ENCODE measurements at regions of chr15 and their contacts with region 1.

Region 1: DNA sequence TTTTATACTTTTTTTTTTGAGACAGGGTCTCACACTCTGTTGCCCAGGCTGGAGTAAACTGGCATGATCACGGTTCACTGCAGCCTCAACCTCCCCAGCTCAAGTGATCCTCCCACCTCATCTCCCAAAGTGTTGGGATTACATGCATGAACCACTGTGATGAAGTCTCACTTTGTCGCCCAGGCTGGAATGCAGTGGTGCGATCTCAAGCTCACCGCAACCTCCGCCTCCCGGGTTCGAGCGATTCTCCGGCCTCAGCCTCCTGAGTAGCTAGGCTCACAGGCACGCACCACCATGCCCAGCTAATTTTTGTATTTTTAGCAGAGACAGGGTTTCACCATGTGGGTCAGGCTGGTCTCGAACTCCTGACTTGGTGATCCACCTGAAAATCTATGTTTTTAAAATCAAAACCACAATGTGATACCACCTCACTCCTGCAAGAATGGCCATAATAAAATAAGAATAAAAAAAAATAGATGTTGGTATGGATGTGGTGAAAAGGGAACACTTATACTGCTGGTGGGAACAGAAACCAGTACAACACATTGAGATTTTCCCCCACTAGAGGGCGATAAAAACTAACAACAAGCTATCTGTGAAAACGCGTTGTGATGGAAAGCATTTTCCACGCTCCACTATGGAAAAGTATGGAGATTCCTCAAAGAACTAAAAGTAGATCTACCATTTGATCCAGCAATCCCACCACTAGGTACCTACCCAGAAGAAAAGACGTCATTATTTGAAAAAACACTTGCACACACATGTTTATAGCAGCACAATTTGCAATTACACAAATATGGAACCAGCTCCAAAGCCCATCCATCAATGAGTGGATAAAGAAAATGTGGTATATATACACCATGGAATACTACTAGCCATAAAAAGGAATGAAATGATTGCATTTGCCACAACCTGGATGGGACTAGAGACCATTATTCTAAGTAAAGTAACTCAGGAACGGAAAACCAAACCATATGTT is 26.8 kb upstream of the OCA2 start:
- DNase-seq: no peak
- ATAC-seq: no peak
- H3K4me3 Mint-ChIP-seq: no peak overlapping the region
- H3K27ac Mint-ChIP-seq: no peak overlapping the region
- H3K4me1 Mint-ChIP-seq: no peaks in the 10 kb centered on the region
- H3K27me3 Mint-ChIP-seq: no peaks in the 10 kb centered on the region
- CTCF ChIP-seq: peak; percentile 77

Region 2: DNA sequence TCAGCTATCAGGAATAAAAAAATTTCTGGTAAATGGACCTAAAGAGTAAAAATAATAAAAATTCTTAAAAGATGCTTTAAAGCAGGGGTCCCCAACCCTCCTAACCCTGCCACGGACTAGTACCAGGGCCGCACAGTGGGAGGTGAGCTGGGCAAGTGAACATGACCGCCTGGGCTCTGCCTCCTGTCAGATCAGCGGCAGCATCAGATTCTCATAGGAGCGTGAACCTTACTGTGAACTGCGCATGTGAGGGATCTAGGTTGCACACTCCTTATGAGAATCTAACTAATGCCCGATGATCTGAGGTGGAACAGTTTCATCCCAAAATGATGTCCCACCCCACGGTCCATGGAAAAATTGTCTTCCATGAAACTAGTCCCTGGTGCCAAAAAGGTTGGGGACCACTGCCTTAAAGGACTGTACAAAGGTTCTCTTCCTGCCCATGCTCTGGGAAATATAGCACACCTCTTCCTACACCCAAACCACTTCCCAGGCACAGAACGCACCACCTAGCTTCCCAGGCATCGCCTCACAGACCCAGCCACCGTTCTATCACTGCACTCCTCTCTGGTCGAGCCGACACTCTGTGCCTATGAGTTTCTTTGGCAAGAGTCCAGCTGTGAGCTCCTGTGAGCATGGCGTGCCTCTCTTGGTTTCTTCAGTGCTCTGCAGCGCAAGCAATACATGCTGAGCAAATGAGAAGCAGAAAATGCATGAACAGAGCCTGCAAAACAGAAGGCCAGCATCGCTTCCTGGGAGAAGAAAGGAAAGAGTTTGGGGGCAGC is 131.8 kb before region 1 on chr15:
- CTCF ChIA-PET with region 1: no interaction called
- POLR2A ChIA-PET with region 1: no interaction called
- intact Hi-C with region 1: no loop called
- DNase-seq: no peak
- ATAC-seq: no peak
- H3K4me3 Mint-ChIP-seq: no peak overlapping the region
- H3K27ac Mint-ChIP-seq: no peak overlapping the region
- H3K4me1 Mint-ChIP-seq: no peaks in the 10 kb centered on the region
- H3K27me3 Mint-ChIP-seq: no peaks in the 10 kb centered on the region
- CTCF ChIP-seq: no peak

Region 3: GRCh38 chr15:28094732-28095521 is 31.0 kb before region 1 on chr15:
- CTCF ChIA-PET with region 1: interaction called, 14 read pairs
- POLR2A ChIA-PET with region 1: no interaction called
- intact Hi-C with region 1: no loop called
- DNase-seq: peak; percentile 24
- ATAC-seq: no peak
- H3K4me3 Mint-ChIP-seq: peak overlapping the region; percentile 76
- H3K27ac Mint-ChIP-seq: no peak overlapping the region
- H3K4me1 Mint-ChIP-seq: peaks cover 21% of the 10 kb centered on the region
- H3K27me3 Mint-ChIP-seq: peaks cover 68% of the 10 kb centered on the region
- CTCF ChIP-seq: no peak

Region 4: DNA sequence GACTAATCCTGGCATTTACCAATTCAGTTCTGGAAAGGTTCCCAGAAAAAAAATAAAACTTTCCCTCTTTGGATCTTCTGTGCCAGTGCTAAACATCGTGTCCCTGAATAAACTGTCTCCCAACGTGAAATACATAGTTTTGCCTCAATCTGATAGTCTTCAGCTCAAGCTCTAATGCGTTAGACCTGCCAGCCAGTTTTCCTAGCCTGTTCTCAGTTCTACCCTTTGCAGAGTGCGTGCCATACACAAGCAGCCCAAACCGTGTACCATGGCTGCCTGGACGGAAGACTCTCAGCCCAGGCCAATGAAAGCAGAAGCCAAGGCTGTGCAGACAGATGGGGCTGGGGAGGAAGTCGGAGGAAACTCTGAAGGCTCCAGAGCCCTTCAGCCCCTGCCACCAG is 15.5 kb before region 1 on chr15:
- CTCF ChIA-PET with region 1: interaction called, 11 read pairs
- POLR2A ChIA-PET with region 1: no interaction called
- intact Hi-C with region 1: no loop called
- DNase-seq: no peak
- ATAC-seq: no peak
- H3K4me3 Mint-ChIP-seq: no peak overlapping the region
- H3K27ac Mint-ChIP-seq: no peak overlapping the region
- H3K4me1 Mint-ChIP-seq: peaks cover 9% of the 10 kb centered on the region
- H3K27me3 Mint-ChIP-seq: peaks cover 8% of the 10 kb centered on the region
- CTCF ChIP-seq: no peak

Region 5: GRCh38 chr15:28169366-28169765 is 43.4 kb after region 1 on chr15:
- CTCF ChIA-PET with region 1: no interaction called
- POLR2A ChIA-PET with region 1: no interaction called
- intact Hi-C with region 1: no loop called
- DNase-seq: no peak
- ATAC-seq: no peak
- H3K4me3 Mint-ChIP-seq: no peak overlapping the region
- H3K27ac Mint-ChIP-seq: no peak overlapping the region
- H3K4me1 Mint-ChIP-seq: no peaks in the 10 kb centered on the region
- H3K27me3 Mint-ChIP-seq: no peaks in the 10 kb centered on the region
- CTCF ChIP-seq: no peak